Caco-2 (cell line): ENCODE measurements at regions of chr21 and their contacts with region 1.

Region 1: GRCh38 chr21:16250273-16250672 is 520.5 kb downstream of the USP25 start:
- DNase-seq: no peak
- H3K4me3 ChIP-seq: no peak overlapping the region
- H3K4me3 Mint-ChIP-seq: no peak overlapping the region
- H3K27ac Mint-ChIP-seq: no peak overlapping the region
- H3K4me1 ChIP-seq: no peaks in the 10 kb centered on the region
- H3K4me1 Mint-ChIP-seq: no peaks in the 10 kb centered on the region
- H3K27me3 ChIP-seq: no peaks in the 10 kb centered on the region
- H3K27me3 Mint-ChIP-seq: peaks cover 3% of the 10 kb centered on the region
- CTCF ChIP-seq: no peak

Region 2: DNA sequence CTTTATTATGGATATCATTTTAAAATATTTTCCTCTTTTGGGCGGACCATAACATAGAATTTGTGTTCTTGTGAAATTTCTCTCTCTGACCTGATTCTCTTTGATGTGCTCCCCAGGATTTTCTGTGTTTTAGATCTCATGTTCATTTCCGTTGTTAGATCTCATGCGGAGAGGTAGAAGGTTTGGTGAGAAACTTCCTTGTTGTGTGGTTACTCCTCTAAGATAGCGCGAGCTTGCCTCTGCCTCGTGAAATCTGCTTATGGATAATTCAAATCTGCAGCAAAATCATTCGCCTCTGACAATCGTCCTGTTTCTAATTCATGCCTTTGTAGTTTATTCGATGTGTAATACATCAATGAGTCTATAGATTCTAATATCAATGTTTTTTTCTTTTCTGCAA is 59.9 kb after region 1 on chr21:
- CTCF ChIA-PET with region 1: no interaction called
- POLR2A ChIA-PET with region 1: no interaction called
- intact Hi-C with region 1: loop called (anchors 10 kb)
- DNase-seq: no peak
- H3K4me3 ChIP-seq: no peak overlapping the region
- H3K4me3 Mint-ChIP-seq: no peak overlapping the region
- H3K27ac Mint-ChIP-seq: no peak overlapping the region
- H3K4me1 ChIP-seq: no peaks in the 10 kb centered on the region
- H3K4me1 Mint-ChIP-seq: no peaks in the 10 kb centered on the region
- H3K27me3 ChIP-seq: no peaks in the 10 kb centered on the region
- H3K27me3 Mint-ChIP-seq: peaks cover 12% of the 10 kb centered on the region
- CTCF ChIP-seq: no peak

Region 3: DNA sequence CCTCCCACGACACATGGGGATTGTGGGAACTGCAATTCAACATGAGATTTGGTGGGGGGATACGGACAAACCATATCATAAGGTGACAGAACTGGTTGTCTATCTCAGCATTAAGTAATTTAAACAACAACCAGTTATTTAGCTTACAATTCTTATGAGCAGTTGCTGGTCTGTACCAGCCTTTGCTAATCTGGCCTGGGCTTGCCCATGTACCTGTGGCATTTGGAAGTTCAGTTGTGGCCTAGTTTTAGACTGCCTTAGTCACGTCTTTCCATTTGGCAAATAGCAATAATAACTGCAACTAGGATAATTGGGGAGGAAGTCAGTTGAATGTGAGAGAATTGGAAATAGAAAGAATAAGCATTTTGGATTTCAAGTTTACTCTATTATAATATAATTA is 820.8 kb after region 1 on chr21:
- CTCF ChIA-PET with region 1: no interaction called
- POLR2A ChIA-PET with region 1: no interaction called
- intact Hi-C with region 1: no loop called
- DNase-seq: no peak
- H3K4me3 ChIP-seq: no peak overlapping the region
- H3K4me3 Mint-ChIP-seq: no peak overlapping the region
- H3K27ac Mint-ChIP-seq: no peak overlapping the region
- H3K4me1 ChIP-seq: no peaks in the 10 kb centered on the region
- H3K4me1 Mint-ChIP-seq: no peaks in the 10 kb centered on the region
- H3K27me3 ChIP-seq: no peaks in the 10 kb centered on the region; the same call in 1 of the 2 replicates
- H3K27me3 Mint-ChIP-seq: peaks cover 4% of the 10 kb centered on the region
- CTCF ChIP-seq: no peak